ENCODE measurements at regions of chrX and their contacts with region 1.

Region 1: GRCh38 chrX:40085102-40085551 is 12.6 kb downstream of the BCOR start:
- DNase-seq: no peak
- H3K4me3 ChIP-seq: no peak overlapping the region
- H3K27ac ChIP-seq: no peak overlapping the region
- H3K4me1 ChIP-seq: peaks cover 4% of the 10 kb centered on the region
- H3K27me3 ChIP-seq: peaks cover 7% of the 10 kb centered on the region
- CTCF ChIP-seq: no peak

Region 2: DNA sequence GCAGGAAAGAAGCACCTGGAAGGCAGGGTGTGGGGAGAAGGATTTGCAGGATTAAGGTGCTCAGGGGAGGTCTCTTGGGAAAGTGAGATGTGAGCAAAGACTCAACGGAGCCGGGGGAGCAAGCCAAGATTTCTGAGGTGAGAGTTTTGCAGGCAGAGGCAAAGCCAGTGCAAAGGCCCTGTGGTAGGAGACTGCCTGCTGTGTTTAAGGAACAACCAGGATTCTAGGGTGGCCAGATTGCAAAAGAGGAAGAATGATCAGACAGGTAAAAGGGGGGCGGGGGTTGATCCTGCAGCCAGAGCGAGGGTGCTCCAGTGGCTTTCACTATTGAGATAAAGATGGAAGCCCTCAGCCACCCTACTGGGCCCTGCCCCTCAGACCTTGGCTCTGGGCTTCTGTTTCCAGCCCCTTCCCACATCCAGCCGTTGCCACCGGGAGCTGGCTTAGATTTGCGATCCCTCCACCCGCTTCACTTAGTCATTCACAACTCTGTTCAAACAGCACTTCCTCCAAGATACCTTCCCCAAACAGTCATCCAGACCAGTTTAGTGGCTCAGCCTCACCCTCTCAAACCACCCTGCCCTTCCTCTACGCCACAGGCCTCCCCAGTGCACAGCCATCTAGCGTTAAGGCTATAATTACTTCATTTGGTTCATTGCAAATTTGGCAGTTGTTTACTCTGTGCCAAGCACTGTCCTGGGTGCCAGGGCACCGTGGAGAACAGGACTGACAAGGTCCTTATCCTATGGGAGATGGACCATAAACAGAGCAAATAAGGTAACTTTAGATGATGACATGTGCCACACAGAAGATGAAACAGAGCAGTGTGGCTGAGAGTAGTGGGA is 35.9 kb after region 1 on chrX:
- CTCF ChIA-PET with region 1: no interaction called
- dilution Hi-C with region 1: loop called (anchors 5 kb)
- in situ Hi-C with region 1: no loop called
- intact Hi-C with region 1: no loop called
- DNase-seq: no peak
- H3K4me3 ChIP-seq: no peak overlapping the region
- H3K27ac ChIP-seq: no peak overlapping the region
- H3K4me1 ChIP-seq: no peaks in the 10 kb centered on the region
- H3K27me3 ChIP-seq: peaks cover 2% of the 10 kb centered on the region
- CTCF ChIP-seq: no peak

Region 3: DNA sequence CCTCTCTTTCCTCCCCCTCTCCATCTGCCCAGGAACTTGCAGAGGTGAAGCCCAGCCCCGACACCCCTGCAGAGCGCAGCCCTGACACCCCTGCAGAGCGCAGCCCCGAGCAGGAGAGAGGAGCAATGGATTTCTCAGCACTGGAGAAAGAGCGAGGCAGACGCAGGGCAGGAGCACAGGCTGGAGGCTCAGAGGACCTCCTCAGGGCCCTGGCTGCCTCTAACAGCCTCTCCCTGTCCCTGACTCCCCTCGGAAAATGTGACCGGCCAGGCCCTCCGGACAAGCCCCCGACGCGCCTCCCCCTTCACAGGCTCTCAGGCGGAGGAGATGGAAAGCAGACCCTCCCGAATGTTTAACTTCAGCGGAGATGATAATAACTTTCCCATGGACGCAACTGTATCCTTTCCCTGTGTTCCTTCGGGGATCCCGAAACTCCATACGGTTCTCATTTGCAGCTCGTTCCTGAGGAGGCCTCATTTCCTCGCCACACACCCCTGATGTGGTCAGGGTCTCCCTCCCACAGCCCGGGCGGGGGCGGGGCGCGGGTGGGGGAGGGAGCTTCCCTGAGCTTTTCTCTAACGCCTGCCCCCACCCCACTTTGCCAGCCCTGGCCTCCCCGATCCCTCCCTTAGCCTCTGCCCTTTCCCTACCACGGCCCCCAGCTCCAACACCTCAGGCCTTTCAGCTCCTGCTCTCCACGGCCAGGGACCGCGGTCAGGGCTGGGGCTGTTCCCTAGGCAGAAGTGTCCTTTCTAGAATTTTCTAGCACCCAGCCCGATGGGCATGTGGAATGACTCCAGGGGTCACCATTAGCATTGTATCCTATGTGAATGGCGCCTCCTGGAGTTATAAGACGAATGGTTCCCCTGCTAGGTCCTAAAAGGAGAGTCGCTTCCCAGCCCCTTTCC is 213.7 kb after region 1 on chrX:
- CTCF ChIA-PET with region 1: no interaction called
- dilution Hi-C with region 1: no loop called
- in situ Hi-C with region 1: no loop called
- intact Hi-C with region 1: no loop called
- DNase-seq: no peak
- H3K4me3 ChIP-seq: no peak overlapping the region
- H3K27ac ChIP-seq: no peak overlapping the region
- H3K4me1 ChIP-seq: no peaks in the 10 kb centered on the region
- H3K27me3 ChIP-seq: no peaks in the 10 kb centered on the region
- CTCF ChIP-seq: no peak

Measured in mammary epithelial cell (primary cell).